ENCODE measurements at regions of chr18 and their contacts with region 1.

Region 1: DNA sequence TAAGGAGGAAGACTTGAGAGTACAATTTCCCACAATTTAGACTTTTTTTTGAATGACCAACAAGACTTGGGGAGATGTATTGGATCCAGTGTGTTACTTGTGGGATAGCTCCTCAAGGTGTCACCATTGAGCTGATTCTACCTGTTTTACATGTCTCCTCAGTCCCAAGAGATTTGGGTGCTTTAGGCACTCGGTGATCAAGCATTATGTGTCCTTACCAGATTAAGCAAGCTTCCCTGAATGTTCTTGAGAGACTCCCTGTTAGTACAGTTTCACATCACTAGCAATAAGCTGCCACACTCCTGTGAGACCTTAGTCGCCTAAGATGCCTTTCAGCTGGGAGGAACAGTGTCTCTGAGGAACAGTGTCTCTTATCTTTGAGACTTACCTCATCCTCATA is 384.3 kb upstream of the SYT4 start:
- DNase-seq: peak; percentile 79
- H3K4me3 ChIP-seq: no peak overlapping the region
- H3K27ac ChIP-seq: no peak overlapping the region
- H3K4me1 ChIP-seq: peaks cover 9% of the 10 kb centered on the region
- H3K27me3 ChIP-seq: no peaks in the 10 kb centered on the region
- CTCF ChIP-seq: peak; percentile 64 to 76

Region 2: GRCh38 chr18:42545825-42546224 is 1115.7 kb before region 1 on chr18:
- CTCF ChIA-PET with region 1: no interaction called
- dilution Hi-C with region 1: no loop called
- in situ Hi-C with region 1: no loop called
- intact Hi-C with region 1: no loop called
- DNase-seq: peak; percentile 84
- H3K4me3 ChIP-seq: no peak overlapping the region
- H3K27ac ChIP-seq: no peak overlapping the region
- H3K4me1 ChIP-seq: peaks cover 4% of the 10 kb centered on the region
- H3K27me3 ChIP-seq: no peaks in the 10 kb centered on the region
- CTCF ChIP-seq: no peak

Region 3: DNA sequence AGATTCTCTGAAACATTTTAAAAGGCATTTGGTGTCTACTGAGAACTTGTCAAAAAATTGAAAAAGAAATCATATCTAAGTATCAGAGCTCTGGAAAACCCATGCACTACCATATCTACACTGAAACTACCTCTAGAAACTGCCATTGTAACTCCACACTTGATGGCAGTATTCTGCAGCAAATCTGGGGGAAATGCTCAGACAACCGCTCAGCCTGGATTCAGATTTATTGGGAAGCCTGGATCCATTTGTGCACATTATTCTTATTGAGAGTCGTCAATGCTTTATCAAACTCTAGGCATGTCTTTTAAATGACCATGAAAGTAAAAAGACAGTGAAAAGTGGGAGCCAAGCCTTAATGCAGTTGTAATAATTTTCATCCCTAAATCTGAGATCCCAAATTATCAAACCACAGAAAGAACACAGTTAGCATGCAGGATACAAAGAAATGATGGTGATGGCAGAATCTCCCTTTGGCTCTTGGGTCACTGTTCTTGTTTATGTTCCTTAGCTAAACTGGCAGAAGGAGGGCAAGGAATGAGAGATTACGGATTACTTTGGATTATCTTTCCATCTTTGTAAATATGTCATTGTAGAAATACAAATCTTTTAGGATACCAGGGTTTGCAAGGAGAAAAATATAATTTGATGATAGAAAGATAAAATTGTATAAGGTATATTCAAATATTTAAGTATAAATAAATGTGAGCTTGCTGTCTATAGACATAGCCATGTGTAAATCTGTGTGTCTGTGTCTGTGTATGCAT is 127.8 kb after region 1 on chr18:
- CTCF ChIA-PET with region 1: no interaction called
- dilution Hi-C with region 1: no loop called
- in situ Hi-C with region 1: no loop called
- intact Hi-C with region 1: loop called (anchors 5 kb)
- DNase-seq: no peak
- H3K4me3 ChIP-seq: no peak overlapping the region
- H3K27ac ChIP-seq: no peak overlapping the region
- H3K4me1 ChIP-seq: no peaks in the 10 kb centered on the region
- H3K27me3 ChIP-seq: no peaks in the 10 kb centered on the region
- CTCF ChIP-seq: peak in 1 of 2 donors; percentile 7

Region 4: GRCh38 chr18:44838971-44839666 is 1177.5 kb after region 1 on chr18:
- CTCF ChIA-PET with region 1: interaction called, 10 read pairs
- dilution Hi-C with region 1: no loop called
- in situ Hi-C with region 1: no loop called
- intact Hi-C with region 1: no loop called
- DNase-seq: peak; percentile 57
- H3K4me3 ChIP-seq: no peak overlapping the region
- H3K27ac ChIP-seq: no peak overlapping the region
- H3K4me1 ChIP-seq: peaks cover 42% of the 10 kb centered on the region
- H3K27me3 ChIP-seq: no peaks in the 10 kb centered on the region
- CTCF ChIP-seq: no peak

Measured in mammary epithelial cell (primary cell).